Spleen (tissue), 13 donors: ENCODE measurements at regions of chr2 and their contacts with region 1.

Region 1: GRCh38 chr2:116935097-116935824 is 879.2 kb upstream of the DDX18 start:
- DNase-seq: no peak
- H3K4me3 ChIP-seq: no peak overlapping the region
- H3K27ac ChIP-seq: no peak overlapping the region
- H3K4me1 ChIP-seq: no peaks in the 10 kb centered on the region
- H3K27me3 ChIP-seq: no peaks in the 10 kb centered on the region
- CTCF ChIP-seq: no peak
- POLR2A ChIP-seq: no peak

Region 2: DNA sequence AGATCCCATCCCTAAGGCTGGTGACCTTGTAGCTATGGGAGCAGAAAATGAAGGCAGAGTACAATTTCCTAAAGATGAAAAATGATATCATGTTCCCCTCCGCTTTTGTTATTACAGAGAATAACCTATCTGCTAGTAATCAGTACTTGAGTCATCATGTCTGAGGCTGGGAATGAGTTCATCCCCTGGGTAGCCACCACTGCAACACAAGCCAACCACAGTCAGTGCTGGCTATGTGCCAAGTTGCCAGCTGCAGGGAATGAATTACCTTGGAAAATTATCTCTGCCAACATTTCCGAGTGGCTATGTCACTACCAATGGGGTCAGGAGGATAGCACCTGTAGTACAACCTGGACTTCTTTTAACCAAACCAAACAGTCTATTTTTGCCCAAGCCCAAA is 215.4 kb before region 1 on chr2:
- intact Hi-C with region 1: no loop called
- DNase-seq: no peak
- H3K4me3 ChIP-seq: no peak overlapping the region
- H3K27ac ChIP-seq: no peak overlapping the region
- H3K4me1 ChIP-seq: no peaks in the 10 kb centered on the region
- H3K27me3 ChIP-seq: no peaks in the 10 kb centered on the region
- CTCF ChIP-seq: no peak
- POLR2A ChIP-seq: no peak

Region 3: GRCh38 chr2:116879650-116880160 is 55.6 kb before region 1 on chr2:
- intact Hi-C with region 1: loop called (anchors 5 kb)
- DNase-seq: no peak
- H3K4me3 ChIP-seq: no peak overlapping the region
- H3K27ac ChIP-seq: no peak overlapping the region
- H3K4me1 ChIP-seq: no peaks in the 10 kb centered on the region
- H3K27me3 ChIP-seq: no peaks in the 10 kb centered on the region
- CTCF ChIP-seq: no peak
- POLR2A ChIP-seq: no peak